Activated naive CD4-positive, alpha-beta T cell treated with anti-CD3 and anti-CD28 coated beads for 36 hours (primary cell): ENCODE measurements at regions of chr2 and their contacts with region 1.

Region 1: GRCh38 chr2:101623031-101623521 is 74.4 kb upstream of the MAP4K4 start:
- DNase-seq: peak; percentile 17
- H3K4me3 Mint-ChIP-seq: peak overlapping the region; percentile 17
- H3K27ac Mint-ChIP-seq: peak overlapping the region; percentile 90
- H3K4me1 Mint-ChIP-seq: peaks cover 39% of the 10 kb centered on the region
- H3K27me3 Mint-ChIP-seq: no peaks in the 10 kb centered on the region

Region 2: DNA sequence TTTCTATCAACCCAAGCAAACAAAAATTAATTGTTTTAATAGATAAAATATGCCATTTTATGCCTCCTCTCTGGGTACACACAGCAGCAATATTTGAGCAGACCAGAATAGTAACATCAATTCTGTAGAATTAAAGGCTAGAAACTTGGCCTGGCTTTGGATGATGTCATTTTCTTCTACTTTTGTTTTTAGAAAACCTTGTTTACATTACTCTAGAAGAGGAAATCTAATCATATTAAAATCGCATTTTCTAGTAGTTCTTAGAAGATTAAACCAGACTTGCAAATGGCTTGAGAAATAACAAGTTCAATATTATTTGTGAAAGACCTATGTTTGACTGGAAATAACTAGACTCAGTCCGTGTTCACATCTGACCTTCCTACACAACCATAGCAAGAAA is 45.9 kb before region 1 on chr2:
- CTCF ChIA-PET with region 1: no interaction called
- intact Hi-C with region 1: no loop called
- DNase-seq: no peak
- H3K4me3 Mint-ChIP-seq: no peak overlapping the region
- H3K27ac Mint-ChIP-seq: no peak overlapping the region
- H3K4me1 Mint-ChIP-seq: peaks cover 33% of the 10 kb centered on the region
- H3K27me3 Mint-ChIP-seq: no peaks in the 10 kb centered on the region

Region 3: GRCh38 chr2:101655702-101656422 is 32.8 kb after region 1 on chr2:
- CTCF ChIA-PET with region 1: no interaction called
- intact Hi-C with region 1: loop called (anchors 1 kb)
- DNase-seq: no peak
- H3K4me3 Mint-ChIP-seq: no peak overlapping the region
- H3K27ac Mint-ChIP-seq: no peak overlapping the region
- H3K4me1 Mint-ChIP-seq: peaks cover 25% of the 10 kb centered on the region
- H3K27me3 Mint-ChIP-seq: no peaks in the 10 kb centered on the region

Region 4: DNA sequence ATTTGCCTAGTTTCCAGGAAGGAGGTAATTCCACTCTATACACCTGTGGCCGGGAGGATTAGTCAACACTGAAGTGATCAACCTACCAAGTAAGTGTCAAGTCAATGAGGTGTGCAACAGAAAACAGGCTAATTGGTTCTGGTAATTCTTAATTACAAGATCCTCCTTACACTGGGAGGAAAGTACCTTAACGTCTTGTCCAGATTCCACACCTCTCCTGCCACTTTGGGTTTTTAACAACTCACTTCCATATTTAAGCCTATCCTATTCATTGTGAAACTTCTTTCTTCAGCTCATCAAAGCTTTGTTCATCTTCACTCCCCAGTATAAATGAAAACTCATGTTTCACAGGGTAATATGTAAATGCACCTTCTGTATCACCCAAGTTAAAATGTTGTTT is 52.4 kb after region 1 on chr2:
- CTCF ChIA-PET with region 1: no interaction called
- intact Hi-C with region 1: loop called (anchors 1 kb)
- DNase-seq: peak; percentile 21
- H3K4me3 Mint-ChIP-seq: no peak overlapping the region
- H3K27ac Mint-ChIP-seq: peak overlapping the region; percentile 3
- H3K4me1 Mint-ChIP-seq: peaks cover 23% of the 10 kb centered on the region
- H3K27me3 Mint-ChIP-seq: no peaks in the 10 kb centered on the region

Region 5: DNA sequence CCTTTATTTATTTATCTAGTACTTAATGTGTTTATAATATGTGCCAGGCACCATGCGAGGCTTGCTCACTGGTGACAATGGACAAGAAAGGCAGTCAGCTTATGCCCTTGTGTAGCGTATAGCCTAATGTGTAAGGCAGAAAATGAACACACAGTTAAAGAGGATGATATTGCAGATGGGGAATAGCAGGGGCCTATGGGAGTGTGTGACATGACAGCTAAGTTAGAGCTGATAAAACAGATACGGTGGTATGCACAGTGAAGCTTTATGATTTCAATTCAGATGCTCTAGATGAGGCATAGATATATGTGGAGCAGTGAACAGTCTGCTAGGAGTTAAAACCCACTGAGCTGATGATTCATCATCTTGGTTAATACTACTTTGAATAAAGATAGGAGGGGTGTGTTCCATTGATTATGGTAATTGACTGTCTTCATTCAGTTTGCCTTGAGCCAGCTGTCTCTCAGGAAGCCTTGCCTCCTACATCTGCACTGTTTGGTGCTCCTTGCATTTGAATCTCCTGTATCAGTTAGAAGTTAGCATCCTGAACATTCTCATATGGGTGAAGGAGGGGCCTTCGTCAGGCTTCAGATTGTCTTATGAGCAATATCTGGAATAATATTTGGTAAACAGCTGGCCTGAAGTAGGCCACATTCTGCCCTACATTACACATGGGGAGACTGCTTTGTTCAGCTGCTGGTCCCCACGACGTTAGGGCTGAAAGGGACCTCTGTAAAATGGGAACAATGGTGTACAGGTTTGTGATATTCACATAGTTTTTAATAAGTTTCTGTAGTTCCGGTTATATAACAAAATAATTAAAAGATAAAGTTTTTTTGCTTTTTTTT is 87.6 kb after region 1 on chr2:
- CTCF ChIA-PET with region 1: no interaction called
- intact Hi-C with region 1: loop called (anchors 2 kb)
- DNase-seq: no peak
- H3K4me3 Mint-ChIP-seq: peak overlapping the region; percentile 23
- H3K27ac Mint-ChIP-seq: peak overlapping the region; percentile 59
- H3K4me1 Mint-ChIP-seq: peaks cover 83% of the 10 kb centered on the region
- H3K27me3 Mint-ChIP-seq: no peaks in the 10 kb centered on the region

Region 6: GRCh38 chr2:101717071-101717845 is 94.2 kb after region 1 on chr2:
- CTCF ChIA-PET with region 1: no interaction called
- intact Hi-C with region 1: loop called (anchors 1 kb)
- DNase-seq: peak; percentile 75
- H3K4me3 Mint-ChIP-seq: peak overlapping the region; percentile 38
- H3K27ac Mint-ChIP-seq: peak overlapping the region; percentile 95
- H3K4me1 Mint-ChIP-seq: peaks cover 92% of the 10 kb centered on the region
- H3K27me3 Mint-ChIP-seq: no peaks in the 10 kb centered on the region

Region 7: GRCh38 chr2:101806123-101806522 is 183.0 kb after region 1 on chr2:
- CTCF ChIA-PET with region 1: no interaction called
- intact Hi-C with region 1: no loop called
- DNase-seq: peak; percentile 69
- H3K4me3 Mint-ChIP-seq: no peak overlapping the region
- H3K27ac Mint-ChIP-seq: peak overlapping the region; percentile 59
- H3K4me1 Mint-ChIP-seq: peaks cover 78% of the 10 kb centered on the region
- H3K27me3 Mint-ChIP-seq: no peaks in the 10 kb centered on the region

Region 8: GRCh38 chr2:101900375-101900774 is 277.3 kb after region 1 on chr2:
- CTCF ChIA-PET with region 1: no interaction called
- intact Hi-C with region 1: loop called (anchors 1 kb)
- DNase-seq: peak; percentile 87
- H3K4me3 Mint-ChIP-seq: no peak overlapping the region
- H3K27ac Mint-ChIP-seq: peak overlapping the region; percentile 87
- H3K4me1 Mint-ChIP-seq: peaks cover 33% of the 10 kb centered on the region
- H3K27me3 Mint-ChIP-seq: peaks cover 2% of the 10 kb centered on the region